ENCODE measurements at regions of chr2 and their contacts with region 1.

Region 1: GRCh38 chr2:152566728-152567069 is 150.6 kb downstream of the PRPF40A start:
- DNase-seq: peak; percentile 56
- ATAC-seq: no peak
- H3K4me3 ChIP-seq: no peak overlapping the region
- H3K27ac ChIP-seq: no peak overlapping the region
- H3K4me1 ChIP-seq: peaks cover 9% of the 10 kb centered on the region; the same call in 1 of the 2 replicates
- H3K27me3 ChIP-seq: no peaks in the 10 kb centered on the region
- CTCF ChIP-seq: no peak
- POLR2A ChIP-seq: no peak
- RAD21 ChIP-seq: no peak

Region 2: GRCh38 chr2:151869291-151869690 is 697.4 kb before region 1 on chr2:
- CTCF ChIA-PET with region 1: no interaction called
- POLR2A ChIA-PET with region 1: no interaction called
- dilution Hi-C with region 1: no loop called
- in situ Hi-C with region 1: no loop called
- intact Hi-C with region 1: loop called (anchors 5 kb)
- DNase-seq: no peak
- ATAC-seq: no peak
- H3K4me3 ChIP-seq: no peak overlapping the region
- H3K27ac ChIP-seq: no peak overlapping the region
- H3K4me1 ChIP-seq: no peaks in the 10 kb centered on the region
- H3K27me3 ChIP-seq: peaks cover 6% of the 10 kb centered on the region
- CTCF ChIP-seq: no peak
- POLR2A ChIP-seq: no peak
- RAD21 ChIP-seq: no peak

Region 3: DNA sequence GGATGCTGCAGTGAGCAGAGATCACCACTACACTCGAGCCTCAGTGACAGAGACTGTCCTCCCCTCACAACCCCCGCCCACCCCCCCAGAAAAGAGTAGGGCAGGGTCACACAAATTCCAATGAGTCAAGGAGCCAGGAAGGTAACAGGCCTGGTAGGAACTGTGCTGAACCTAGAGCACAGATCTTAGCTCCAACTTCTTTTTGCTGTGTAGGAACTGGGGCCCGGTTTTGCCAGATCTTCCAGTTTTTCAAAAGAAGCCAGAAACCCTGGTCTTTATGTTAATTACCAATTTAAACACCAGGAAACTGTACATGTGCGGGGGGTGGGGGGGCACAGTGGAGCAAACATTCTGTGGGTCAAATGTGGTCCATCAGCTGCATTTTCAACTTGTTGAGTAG is 79.6 kb after region 1 on chr2:
- CTCF ChIA-PET with region 1: no interaction called
- POLR2A ChIA-PET with region 1: no interaction called
- dilution Hi-C with region 1: no loop called
- in situ Hi-C with region 1: no loop called
- intact Hi-C with region 1: no loop called
- DNase-seq: no peak
- ATAC-seq: no peak
- H3K4me3 ChIP-seq: no peak overlapping the region
- H3K27ac ChIP-seq: no peak overlapping the region
- H3K4me1 ChIP-seq: peaks cover 3% of the 10 kb centered on the region; the same call in 1 of the 2 replicates
- H3K27me3 ChIP-seq: no peaks in the 10 kb centered on the region
- CTCF ChIP-seq: no peak
- POLR2A ChIP-seq: no peak
- RAD21 ChIP-seq: no peak

Region 4: DNA sequence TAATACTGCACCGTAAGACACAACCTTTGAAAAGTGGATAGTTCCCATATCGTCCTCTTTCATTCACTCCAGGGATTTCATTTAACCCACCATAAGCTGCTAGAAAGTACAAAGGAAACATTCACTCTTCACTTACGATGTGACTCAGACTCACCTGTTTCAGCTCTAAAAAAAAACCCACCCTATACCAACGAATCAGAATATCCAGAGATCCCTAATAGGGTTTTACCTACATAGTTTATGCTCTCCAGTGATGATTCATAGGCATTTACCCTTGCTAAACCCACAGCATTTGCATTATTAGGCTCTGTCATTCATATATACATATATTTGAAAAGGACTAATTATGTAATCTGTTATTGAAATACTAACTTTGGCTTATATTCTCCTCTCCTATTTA is 90.3 kb after region 1 on chr2:
- CTCF ChIA-PET with region 1: no interaction called
- POLR2A ChIA-PET with region 1: no interaction called
- dilution Hi-C with region 1: no loop called
- in situ Hi-C with region 1: no loop called
- intact Hi-C with region 1: no loop called
- DNase-seq: no peak
- ATAC-seq: no peak
- H3K4me3 ChIP-seq: no peak overlapping the region
- H3K27ac ChIP-seq: no peak overlapping the region
- H3K4me1 ChIP-seq: no peaks in the 10 kb centered on the region
- H3K27me3 ChIP-seq: no peaks in the 10 kb centered on the region
- CTCF ChIP-seq: no peak
- POLR2A ChIP-seq: no peak
- RAD21 ChIP-seq: no peak